ENCODE measurements at regions of chr11 and their contacts with region 1.

Region 1: DNA sequence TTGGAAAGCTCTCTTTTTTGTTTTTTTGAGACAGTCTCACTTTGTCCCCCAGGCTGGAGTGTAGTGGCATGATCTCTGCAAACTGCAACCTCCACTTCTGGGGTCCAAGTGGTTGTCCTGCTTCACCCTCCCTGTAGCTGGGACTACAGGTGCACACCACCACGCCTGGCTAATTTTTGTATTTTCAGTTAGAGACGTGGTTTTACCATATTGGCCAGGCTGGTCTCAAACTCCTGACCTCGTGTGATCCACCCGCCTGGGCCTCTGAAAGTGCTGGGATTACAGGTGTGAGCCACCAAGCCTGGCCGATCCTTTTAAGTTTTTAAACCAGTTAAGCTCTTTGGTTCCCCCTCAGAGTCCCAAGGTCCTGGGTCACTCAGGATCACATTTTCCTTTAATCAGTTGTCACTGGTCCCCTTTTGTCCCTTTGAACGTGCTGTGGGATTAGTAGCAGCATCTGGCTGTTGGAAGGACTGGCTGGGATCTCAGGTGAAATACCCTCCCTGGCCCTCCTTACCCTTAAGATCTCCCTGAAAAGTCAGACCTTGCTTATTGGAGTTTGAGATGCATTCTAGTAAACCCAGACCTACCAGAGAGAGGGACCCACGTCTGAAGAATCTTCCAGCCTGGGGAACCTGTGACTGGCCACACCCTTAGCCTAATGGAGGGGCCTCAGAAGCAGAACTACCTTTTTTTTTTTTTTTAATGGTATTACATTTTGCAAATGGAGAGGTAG is 8.1 kb downstream of the MALAT1 start:
- DNase-seq: peak; percentile 59 to 74
- ATAC-seq: peak; percentile 27 to 37 (median 32)
- H3K4me3 ChIP-seq: peak overlapping the region; percentile 92
- H3K27ac ChIP-seq: peak overlapping the region; percentile 99
- H3K4me1 ChIP-seq: peaks cover 30% of the 10 kb centered on the region
- H3K27me3 ChIP-seq: no peaks in the 10 kb centered on the region
- CTCF ChIP-seq: no peak

Region 2: GRCh38 chr11:65366340-65366773 is 140.6 kb before region 1 on chr11:
- intact Hi-C with region 1: loop called (anchors 1 to 2 kb)
- DNase-seq: no peak
- ATAC-seq: peak; percentile 55 to 70 (median 62)
- H3K4me3 ChIP-seq: peak overlapping the region; percentile 22
- H3K27ac ChIP-seq: peak overlapping the region; percentile 67
- H3K4me1 ChIP-seq: peaks cover 29% of the 10 kb centered on the region
- H3K27me3 ChIP-seq: no peaks in the 10 kb centered on the region
- CTCF ChIP-seq: peak; percentile 77

Region 3: DNA sequence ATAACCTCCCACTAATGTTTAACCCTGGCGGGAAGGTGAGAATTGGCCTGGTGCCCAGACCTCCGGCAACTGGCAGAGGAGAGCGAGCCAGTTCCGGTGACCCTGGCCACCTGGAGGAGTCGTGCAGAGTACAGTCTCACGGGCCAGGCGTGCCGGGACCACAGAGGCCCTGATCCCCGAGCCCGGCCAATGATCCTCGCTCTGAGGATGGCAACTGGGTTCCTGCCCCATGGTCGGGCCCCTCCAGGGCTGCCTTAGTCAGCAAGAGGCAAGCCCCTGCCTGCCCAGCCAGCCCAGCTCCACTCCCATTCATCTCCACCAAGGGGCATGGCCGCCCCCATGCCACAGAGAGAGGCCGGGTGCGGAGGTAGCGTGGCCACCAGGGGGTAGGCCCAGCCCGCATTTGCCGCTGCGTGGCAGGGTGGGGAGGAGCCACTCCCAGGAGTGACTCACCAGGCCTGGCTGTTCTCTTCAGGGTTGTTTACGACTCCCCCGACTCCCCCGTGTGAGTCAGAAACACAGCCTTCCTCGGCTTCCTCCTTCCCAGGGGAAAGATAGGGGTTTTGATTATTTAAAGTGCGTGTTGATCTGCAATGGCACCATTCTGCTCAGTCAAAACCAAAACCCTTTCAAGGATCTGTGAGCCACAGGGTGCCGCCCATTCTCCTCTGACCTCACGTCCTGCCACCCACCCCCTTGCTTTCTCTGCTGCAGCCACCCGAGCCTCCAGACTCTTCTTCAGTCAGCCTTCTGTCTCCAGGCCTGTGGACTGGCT is 124.7 kb before region 1 on chr11 and contains the start of gene SLC25A45:
- intact Hi-C with region 1: loop called in 1 of 2 experiments (anchors 1 kb)
- DNase-seq: peak; percentile 94 to 97
- ATAC-seq: peak; percentile 87 to 90 (median 88)
- H3K4me3 ChIP-seq: peak within 1 kb of the TSS; percentile 53
- H3K27ac ChIP-seq: peak within 1 kb of the TSS; percentile 89
- H3K4me1 ChIP-seq: peaks cover 43% of the 10 kb centered on the region
- H3K27me3 ChIP-seq: no peaks in the 10 kb centered on the region
- CTCF ChIP-seq: peak; percentile 80
- total RNA-seq, gene SLC25A45: 5.7 to 8.8 (median 7.2) TPM

Region 4: GRCh38 chr11:65471410-65471762 is 35.6 kb before region 1 on chr11:
- intact Hi-C with region 1: loop called in 1 of 2 experiments (anchors 2 kb)
- DNase-seq: peak; percentile 85 to 94
- ATAC-seq: peak; percentile 81 to 84 (median 82)
- H3K4me3 ChIP-seq: peak overlapping the region; percentile 61
- H3K27ac ChIP-seq: peak overlapping the region; percentile 99
- H3K4me1 ChIP-seq: peaks cover 54% of the 10 kb centered on the region
- H3K27me3 ChIP-seq: no peaks in the 10 kb centered on the region
- CTCF ChIP-seq: peak; percentile 63